HEK293T (cell line): ENCODE measurements at regions of chr19 and their contacts with region 1.

Region 1: GRCh38 chr19:2950286-2951124 is 5.7 kb upstream of the ZNF77 start:
- DNase-seq: peak; percentile 98

Region 2: DNA sequence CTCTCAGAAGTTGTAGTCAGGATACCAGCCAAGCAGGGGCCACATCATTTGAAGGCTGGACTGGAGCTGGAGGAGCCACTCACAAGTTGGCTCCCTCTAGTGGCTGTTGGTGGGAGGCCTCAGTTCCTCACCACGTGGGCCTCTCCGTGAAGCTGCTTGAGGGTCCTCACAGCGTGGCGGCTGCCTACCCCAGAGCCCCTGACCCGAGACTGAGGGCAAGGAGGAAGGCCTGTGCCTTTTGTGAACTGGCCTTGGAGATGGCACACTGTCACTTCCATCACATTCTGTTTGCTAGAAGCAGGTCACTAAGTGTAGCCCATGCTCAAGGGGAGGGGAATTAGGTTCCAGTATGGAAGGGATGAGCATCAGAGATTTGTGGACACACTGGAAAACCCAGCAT is 158.3 kb after region 1 on chr19:
- CTCF ChIA-PET with region 1: interaction called, 10 read pairs
- POLR2A ChIA-PET with region 1: interaction called, 7 read pairs
- DNase-seq: peak; percentile 67